ENCODE measurements at regions of chr19 and their contacts with region 1.

Region 1: GRCh38 chr19:8252922-8253589 is 43.9 kb downstream of the CERS4 start:
- DNase-seq: peak; percentile 73 to 91 (median 87)
- H3K4me3 ChIP-seq: no peak overlapping the region
- H3K27ac ChIP-seq: no peak overlapping the region
- H3K4me1 ChIP-seq: peaks cover 3% of the 10 kb centered on the region
- H3K27me3 ChIP-seq: no peaks in the 10 kb centered on the region
- CTCF ChIP-seq: peak; percentile 82 to 91 (median 86)
- EP300 ChIP-seq: no peak
- POLR2A ChIP-seq: no peak

Region 2: DNA sequence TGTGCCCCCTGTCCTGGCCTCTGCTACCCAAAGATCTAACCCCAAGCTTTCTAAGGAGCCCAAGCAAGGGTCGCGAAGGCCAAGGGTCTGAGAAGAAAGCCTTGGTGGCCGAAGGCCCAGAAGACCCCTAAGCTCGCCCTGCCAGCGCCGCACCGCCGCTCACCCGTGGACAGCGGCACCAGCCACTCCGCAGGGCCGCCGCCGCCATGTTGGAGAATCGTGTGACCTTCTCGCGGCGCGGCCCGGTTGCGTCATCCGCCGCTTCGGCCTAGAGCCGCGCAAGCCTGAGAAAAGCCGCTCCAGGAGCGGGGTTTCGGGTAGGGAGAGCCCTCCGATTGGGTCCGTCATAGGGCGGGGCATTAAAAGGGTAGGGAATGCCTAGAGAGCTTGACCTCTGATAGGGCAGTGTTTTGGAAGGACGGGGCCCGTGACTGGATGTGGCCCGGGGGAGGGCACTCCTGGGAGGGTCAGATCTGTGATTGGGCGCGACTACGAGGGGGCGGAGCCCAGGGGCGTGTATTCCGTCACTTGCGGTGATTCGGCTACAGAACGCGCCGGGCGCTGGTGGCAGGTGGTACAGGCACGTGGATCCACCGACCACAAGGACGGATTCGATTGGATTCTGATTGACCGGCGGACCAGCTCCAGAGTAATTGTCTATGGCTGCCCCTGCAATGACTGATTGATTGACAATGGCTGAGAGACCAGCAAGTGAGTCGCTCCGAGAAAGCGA is 309.4 kb before region 1 on chr19 and contains the start of gene TIMM44:
- intact Hi-C with region 1: loop called in 2 of 4 experiments (anchors 1 to 10 kb)
- DNase-seq: peak; percentile 98 to 99 (median 98)
- H3K4me3 ChIP-seq: peak within 1 kb of the TSS; percentile 61
- H3K27ac ChIP-seq: peak within 1 kb of the TSS; percentile 97 to 98
- H3K4me1 ChIP-seq: peaks cover 10% of the 10 kb centered on the region
- H3K27me3 ChIP-seq: no peaks in the 10 kb centered on the region
- CTCF ChIP-seq: peak in 1 of 3 donors; percentile 21
- EP300 ChIP-seq: peak; percentile 75
- POLR2A ChIP-seq: peak; percentile 63
- total RNA-seq, gene TIMM44: 43.4 to 110 (median 51.8) TPM

Region 3: GRCh38 chr19:7968796-7969554 is 284.1 kb before region 1 on chr19:
- intact Hi-C with region 1: loop called in 1 of 4 experiments (anchors 10 kb)
- DNase-seq: no peak
- H3K4me3 ChIP-seq: no peak overlapping the region
- H3K27ac ChIP-seq: no peak overlapping the region
- H3K4me1 ChIP-seq: no peaks in the 10 kb centered on the region
- H3K27me3 ChIP-seq: no peaks in the 10 kb centered on the region
- CTCF ChIP-seq: no peak
- EP300 ChIP-seq: no peak
- POLR2A ChIP-seq: no peak

Region 4: DNA sequence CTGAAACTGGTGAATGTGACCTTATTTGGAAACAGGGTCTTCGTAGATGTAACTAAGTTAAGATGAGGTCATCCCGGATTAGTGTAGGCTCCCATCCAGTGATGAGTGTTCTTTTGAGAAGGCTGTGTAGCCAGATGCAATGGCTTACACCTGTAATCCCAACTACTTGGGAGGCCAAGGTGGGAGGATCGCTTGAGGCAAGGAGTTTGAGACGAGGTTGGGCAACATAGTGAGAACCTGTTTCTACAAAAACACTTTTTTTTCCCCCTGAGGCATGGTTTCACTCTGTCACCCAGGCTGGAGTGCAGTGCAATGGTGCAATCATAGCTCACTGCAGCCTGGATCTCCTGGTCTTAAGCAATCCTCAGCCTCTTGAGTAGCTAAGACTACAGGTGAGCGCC is 140.0 kb before region 1 on chr19:
- intact Hi-C with region 1: no loop called
- DNase-seq: no peak
- H3K4me3 ChIP-seq: no peak overlapping the region
- H3K27ac ChIP-seq: no peak overlapping the region
- H3K4me1 ChIP-seq: no peaks in the 10 kb centered on the region
- H3K27me3 ChIP-seq: no peaks in the 10 kb centered on the region
- CTCF ChIP-seq: no peak
- EP300 ChIP-seq: no peak
- POLR2A ChIP-seq: no peak

Region 5: DNA sequence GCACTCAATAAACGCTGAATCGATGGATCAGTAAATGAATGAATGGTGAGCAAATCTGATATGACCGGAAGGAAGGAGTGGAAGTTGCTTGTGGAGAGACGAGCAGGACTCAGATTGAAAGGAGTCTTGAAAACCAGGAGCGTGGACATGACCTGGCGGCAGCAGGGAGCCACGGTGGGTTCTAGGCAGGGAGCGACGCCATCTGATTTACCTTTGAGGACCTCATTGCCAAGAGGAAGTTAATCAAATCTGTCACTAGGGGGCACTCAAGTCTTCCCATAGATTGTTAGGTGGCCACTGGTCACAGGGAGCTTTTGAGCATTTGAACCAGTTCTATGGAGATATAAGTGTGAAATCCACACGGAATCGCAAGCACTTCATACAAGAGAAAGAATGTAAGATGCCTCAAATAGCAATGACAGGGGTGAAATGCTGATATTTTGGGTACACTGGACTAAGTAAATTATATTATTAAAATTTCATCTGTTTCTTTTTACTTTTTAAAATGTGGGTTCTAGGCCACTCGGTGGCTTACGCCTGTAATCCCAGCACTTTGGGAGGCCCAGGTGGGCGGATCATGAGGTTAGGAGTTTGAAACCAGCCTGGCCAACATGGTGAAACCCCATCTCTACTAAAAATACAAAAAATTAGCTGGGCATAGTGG is 94.5 kb before region 1 on chr19:
- intact Hi-C with region 1: loop called in 3 of 4 experiments (anchors 5 to 10 kb)
- DNase-seq: peak in 1 of 5 donors; percentile 41
- H3K4me3 ChIP-seq: no peak overlapping the region
- H3K27ac ChIP-seq: no peak overlapping the region
- H3K4me1 ChIP-seq: peaks cover 4% of the 10 kb centered on the region
- H3K27me3 ChIP-seq: no peaks in the 10 kb centered on the region
- CTCF ChIP-seq: peak in 1 of 3 donors; percentile 18
- EP300 ChIP-seq: no peak
- POLR2A ChIP-seq: no peak

Measured in ovary (tissue), 10 donors.